ENCODE measurements at regions of chr22 and their contacts with region 1.

Region 1: DNA sequence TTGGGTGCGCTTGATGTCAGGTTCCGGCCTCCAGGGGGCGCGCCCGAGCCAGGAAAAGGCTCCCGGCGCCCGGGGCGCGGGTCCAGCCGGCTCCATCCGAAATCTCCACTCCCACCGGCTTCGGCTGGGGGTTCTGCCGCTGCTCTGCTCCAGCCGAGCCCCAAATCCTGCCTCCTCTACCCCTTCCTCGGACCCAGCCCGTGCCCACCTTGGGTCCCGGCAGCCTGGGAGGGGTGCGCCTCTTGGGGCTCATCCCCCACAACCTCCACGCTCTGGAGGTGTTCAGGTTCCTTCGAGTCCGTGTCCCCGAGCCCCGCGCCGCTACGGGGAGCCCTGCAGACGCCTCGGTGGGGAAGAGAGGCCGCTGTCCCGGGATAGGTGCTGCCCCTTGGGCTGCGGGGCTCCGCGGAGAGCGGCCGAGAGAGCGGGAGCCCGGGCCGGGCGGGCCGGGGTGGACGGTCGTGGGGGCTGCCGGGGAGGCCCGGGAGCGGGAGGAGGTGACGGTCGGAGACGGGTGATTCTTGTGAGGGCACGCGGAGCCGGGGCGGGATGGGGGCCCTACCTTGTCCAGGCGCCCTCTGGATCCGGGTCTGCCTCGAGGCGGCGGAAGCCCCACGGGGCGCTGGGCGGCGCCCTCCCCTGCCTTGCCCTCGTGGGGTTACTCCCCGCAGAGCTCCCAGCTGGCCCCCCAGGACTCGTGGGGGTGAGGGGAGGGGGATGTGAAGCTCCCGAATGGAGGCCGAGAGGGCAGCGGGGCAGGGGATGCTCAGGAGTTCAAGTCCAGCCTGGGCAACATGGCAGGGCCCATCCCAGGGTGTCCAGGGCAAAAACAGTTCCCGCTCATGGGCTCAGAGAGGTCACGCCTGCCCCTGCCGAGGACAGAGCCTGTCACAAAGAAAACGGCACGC is 13.2 kb upstream of the CYB5R3 start:
- DNase-seq: peak; percentile 86
- ATAC-seq: peak; percentile 60
- H3K4me3 ChIP-seq: peak overlapping the region; percentile 38 to 70 (median 70)
- H3K4me3 Mint-ChIP-seq: peak overlapping the region; percentile 83
- H3K27ac ChIP-seq: peak overlapping the region; percentile 16 to 28
- H3K27ac Mint-ChIP-seq: peak overlapping the region; percentile 50
- H3K4me1 ChIP-seq: peaks cover 18 to 43% of the 10 kb centered on the region in 2 donors
- H3K4me1 Mint-ChIP-seq: peaks cover 25% of the 10 kb centered on the region
- H3K27me3 ChIP-seq: no peaks in the 10 kb centered on the region
- H3K27me3 Mint-ChIP-seq: no peaks in the 10 kb centered on the region
- CTCF ChIP-seq: peak; percentile 88

Region 2: GRCh38 chr22:42649246-42650099 is 12.9 kb before region 1 on chr22 and contains the start of gene CYB5R3:
- CTCF ChIA-PET with region 1: interaction called, 3 read pairs
- POLR2A ChIA-PET with region 1: interaction called, 4 read pairs
- intact Hi-C with region 1: loop called (anchors 2 kb)
- DNase-seq: peak; percentile 83
- ATAC-seq: peak; percentile 78
- H3K4me3 ChIP-seq: peak within 1 kb of the TSS; percentile 72 to 86 (median 82)
- H3K4me3 Mint-ChIP-seq: peak within 1 kb of the TSS; percentile 99
- H3K27ac ChIP-seq: peak within 1 kb of the TSS; percentile 85 to 88
- H3K27ac Mint-ChIP-seq: peak within 1 kb of the TSS; percentile 98
- H3K4me1 ChIP-seq: peaks cover 47 to 59% of the 10 kb centered on the region in 2 donors
- H3K4me1 Mint-ChIP-seq: peaks cover 54% of the 10 kb centered on the region
- H3K27me3 ChIP-seq: no peaks in the 10 kb centered on the region
- H3K27me3 Mint-ChIP-seq: no peaks in the 10 kb centered on the region
- CTCF ChIP-seq: no peak
- total RNA-seq, gene CYB5R3: 79.2 and 80.6 TPM in 2 replicates

Region 3: GRCh38 chr22:42745118-42745517 is 82.8 kb after region 1 on chr22:
- CTCF ChIA-PET with region 1: no interaction called
- POLR2A ChIA-PET with region 1: no interaction called
- intact Hi-C with region 1: no loop called
- DNase-seq: no peak
- ATAC-seq: no peak
- H3K4me3 ChIP-seq: no peak overlapping the region
- H3K4me3 Mint-ChIP-seq: no peak overlapping the region
- H3K27ac ChIP-seq: no peak overlapping the region
- H3K27ac Mint-ChIP-seq: no peak overlapping the region
- H3K4me1 ChIP-seq: no peaks in the 10 kb centered on the region
- H3K4me1 Mint-ChIP-seq: peaks cover 2% of the 10 kb centered on the region
- H3K27me3 ChIP-seq: no peaks in the 10 kb centered on the region
- H3K27me3 Mint-ChIP-seq: peaks cover 5% of the 10 kb centered on the region
- CTCF ChIP-seq: no peak

Region 4: DNA sequence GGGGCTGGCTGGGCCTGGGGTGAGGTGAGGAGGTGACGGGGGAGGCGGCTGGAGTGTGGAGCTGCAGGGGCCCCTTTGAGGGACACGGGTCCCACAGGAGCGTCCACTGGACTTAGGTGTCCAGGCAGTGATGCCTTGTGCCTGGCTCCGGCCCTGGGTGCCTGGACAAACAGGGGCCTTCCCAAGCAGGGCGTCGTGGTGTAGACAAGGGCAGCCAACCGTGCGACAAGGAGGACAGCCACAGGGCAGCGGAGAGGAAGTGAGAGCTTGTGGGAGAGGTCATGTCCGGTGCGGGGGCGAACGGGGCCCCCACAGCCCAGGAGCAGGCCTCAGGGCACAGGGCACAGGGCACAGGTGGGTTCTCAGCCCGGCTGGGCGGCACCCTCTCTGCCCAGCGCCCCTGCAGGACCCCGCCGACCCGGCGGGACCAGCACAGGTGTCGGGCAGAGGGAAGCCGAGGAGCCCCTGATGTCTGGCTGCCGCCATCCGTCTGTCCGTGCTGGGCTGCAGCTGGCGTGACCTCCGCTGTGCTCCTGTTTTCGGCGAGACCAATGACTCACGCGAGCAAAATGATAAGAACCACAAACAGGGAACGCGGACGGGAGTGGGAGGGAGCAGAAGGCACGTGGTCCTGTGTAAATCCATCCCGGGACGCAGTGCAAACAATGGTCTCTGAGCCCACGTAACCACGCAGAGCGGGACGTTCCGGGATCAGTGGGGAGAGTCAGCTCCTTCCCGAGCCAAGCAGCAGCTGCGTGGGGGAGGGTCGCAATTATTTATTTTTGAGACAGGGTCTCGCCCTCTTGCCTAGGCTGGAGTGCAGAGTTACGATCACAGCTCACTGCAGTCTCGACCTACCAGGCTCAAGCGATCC is 107.4 kb after region 1 on chr22:
- CTCF ChIA-PET with region 1: interaction called, 3 read pairs
- POLR2A ChIA-PET with region 1: no interaction called
- intact Hi-C with region 1: loop called (anchors 5 kb)
- DNase-seq: peak; percentile 75
- ATAC-seq: peak; percentile 91
- H3K4me3 ChIP-seq: peak overlapping the region in 4 of 5 experiments; percentile 21 to 47 (median 30)
- H3K4me3 Mint-ChIP-seq: peak overlapping the region; percentile 83
- H3K27ac ChIP-seq: no peak overlapping the region
- H3K27ac Mint-ChIP-seq: peak overlapping the region; percentile 80
- H3K4me1 ChIP-seq: peaks cover 37 to 57% of the 10 kb centered on the region in 2 donors
- H3K4me1 Mint-ChIP-seq: peaks cover 64% of the 10 kb centered on the region
- H3K27me3 ChIP-seq: no peaks in the 10 kb centered on the region
- H3K27me3 Mint-ChIP-seq: no peaks in the 10 kb centered on the region
- CTCF ChIP-seq: no peak

Region 5: DNA sequence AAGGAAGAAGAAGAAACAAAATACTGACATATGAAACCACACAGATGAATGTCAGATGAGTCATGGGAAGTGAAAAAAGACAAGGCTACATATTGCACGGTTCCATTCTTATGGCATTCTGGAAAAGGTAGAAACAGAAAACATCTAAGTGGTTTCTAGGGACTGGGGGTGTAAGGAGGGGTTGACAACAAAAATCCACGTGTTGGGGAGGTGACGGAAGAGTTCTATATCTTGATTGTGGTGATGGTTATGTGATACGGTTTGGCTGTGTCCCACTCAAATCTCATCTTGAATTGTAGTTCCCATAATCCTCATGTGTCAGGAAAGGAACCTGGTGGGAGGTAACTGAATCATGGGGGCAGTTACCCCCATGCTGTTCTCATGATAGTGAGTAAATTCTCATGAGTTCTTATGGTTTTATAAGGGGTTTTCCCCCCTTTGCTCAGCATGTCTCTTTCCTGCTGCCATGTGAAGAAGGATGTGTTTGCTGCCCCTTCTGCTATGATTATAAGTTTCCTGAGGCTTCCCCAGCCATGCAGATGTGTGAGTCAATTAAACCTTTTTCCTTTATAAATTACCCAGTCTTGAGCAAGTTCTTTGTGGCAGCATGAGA is 201.1 kb after region 1 on chr22:
- CTCF ChIA-PET with region 1: interaction called, 26 read pairs
- POLR2A ChIA-PET with region 1: no interaction called
- intact Hi-C with region 1: loop called (anchors 1 kb)
- DNase-seq: peak; percentile 60
- ATAC-seq: peak; percentile 52
- H3K4me3 ChIP-seq: no peak overlapping the region
- H3K4me3 Mint-ChIP-seq: peak overlapping the region; percentile 82
- H3K27ac ChIP-seq: peak overlapping the region; percentile 45
- H3K27ac Mint-ChIP-seq: peak overlapping the region; percentile 95
- H3K4me1 ChIP-seq: peaks cover 17 to 44% of the 10 kb centered on the region in 2 donors
- H3K4me1 Mint-ChIP-seq: peaks cover 36% of the 10 kb centered on the region
- H3K27me3 ChIP-seq: no peaks in the 10 kb centered on the region
- H3K27me3 Mint-ChIP-seq: no peaks in the 10 kb centered on the region
- CTCF ChIP-seq: no peak

Region 6: DNA sequence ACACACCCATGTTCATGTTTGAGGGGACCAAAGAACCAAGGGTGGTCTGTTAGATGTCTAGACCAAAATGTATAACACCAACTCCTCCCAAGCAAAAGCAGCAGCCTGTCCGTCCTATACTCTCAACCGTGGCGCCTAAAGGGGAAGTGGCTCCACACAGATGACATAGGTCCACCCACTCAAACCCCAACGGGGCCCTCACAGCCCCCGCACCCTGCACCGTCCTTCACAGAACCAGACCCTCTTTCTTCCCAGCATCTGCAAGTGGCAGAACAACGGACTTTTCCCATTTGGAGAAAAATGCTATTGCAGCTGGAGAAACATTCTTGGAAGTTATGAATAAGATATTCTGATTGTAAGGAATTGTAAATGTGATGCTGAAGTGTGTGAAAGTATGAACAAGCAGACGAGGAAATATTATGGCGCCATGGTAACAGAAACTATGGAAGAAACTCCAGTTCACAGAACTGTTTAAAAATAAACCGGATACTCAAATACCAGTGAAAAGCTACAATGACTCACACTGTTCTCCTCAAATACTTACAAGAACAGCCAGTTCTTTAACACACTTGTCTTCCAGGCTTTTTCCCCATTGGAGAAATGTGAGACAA is 271.2 kb after region 1 on chr22:
- CTCF ChIA-PET with region 1: no interaction called
- POLR2A ChIA-PET with region 1: no interaction called
- intact Hi-C with region 1: loop called (anchors 10 kb)
- DNase-seq: peak; percentile 88
- ATAC-seq: peak; percentile 74
- H3K4me3 ChIP-seq: peak overlapping the region; percentile 36 to 81 (median 58)
- H3K4me3 Mint-ChIP-seq: peak overlapping the region; percentile 78
- H3K27ac ChIP-seq: peak overlapping the region; percentile 96 to 100
- H3K27ac Mint-ChIP-seq: peak overlapping the region; percentile 91
- H3K4me1 ChIP-seq: peaks cover 97 to 100% of the 10 kb centered on the region in 2 donors
- H3K4me1 Mint-ChIP-seq: peaks cover 93% of the 10 kb centered on the region
- H3K27me3 ChIP-seq: no peaks in the 10 kb centered on the region
- H3K27me3 Mint-ChIP-seq: no peaks in the 10 kb centered on the region
- CTCF ChIP-seq: no peak